BJ (cell line): ENCODE measurements at regions of chr10 and their contacts with region 1.

Region 1: DNA sequence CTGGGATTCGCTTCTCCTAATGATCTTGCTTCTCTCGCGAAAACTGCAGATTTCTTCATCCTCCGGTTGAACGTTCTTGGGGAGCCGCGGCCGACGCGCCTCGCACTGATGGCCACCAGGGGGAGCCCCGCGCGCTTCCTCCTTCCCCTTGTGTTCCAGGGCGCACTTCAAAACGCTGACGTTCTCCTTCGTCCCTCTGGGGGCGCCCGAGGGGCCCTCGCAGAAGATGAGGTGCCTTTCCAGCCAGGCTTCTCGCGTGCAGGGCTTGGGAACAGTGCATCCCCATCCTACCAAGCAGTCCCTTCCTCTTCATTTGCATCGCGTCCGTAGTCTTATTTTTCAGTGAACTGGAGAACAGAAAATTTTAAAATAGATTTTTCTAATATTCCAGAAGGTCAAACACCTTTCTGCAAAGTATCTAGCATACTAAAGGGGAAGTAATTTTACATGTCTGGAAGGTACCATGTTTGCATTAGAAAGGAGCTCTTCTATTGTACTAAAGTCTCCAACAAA is 22.5 kb downstream of the GSTO2 start:
- DNase-seq: no peak
- H3K4me3 ChIP-seq: no peak overlapping the region
- H3K27me3 ChIP-seq: no peaks in the 10 kb centered on the region
- CTCF ChIP-seq: peak; percentile 100

Region 2: DNA sequence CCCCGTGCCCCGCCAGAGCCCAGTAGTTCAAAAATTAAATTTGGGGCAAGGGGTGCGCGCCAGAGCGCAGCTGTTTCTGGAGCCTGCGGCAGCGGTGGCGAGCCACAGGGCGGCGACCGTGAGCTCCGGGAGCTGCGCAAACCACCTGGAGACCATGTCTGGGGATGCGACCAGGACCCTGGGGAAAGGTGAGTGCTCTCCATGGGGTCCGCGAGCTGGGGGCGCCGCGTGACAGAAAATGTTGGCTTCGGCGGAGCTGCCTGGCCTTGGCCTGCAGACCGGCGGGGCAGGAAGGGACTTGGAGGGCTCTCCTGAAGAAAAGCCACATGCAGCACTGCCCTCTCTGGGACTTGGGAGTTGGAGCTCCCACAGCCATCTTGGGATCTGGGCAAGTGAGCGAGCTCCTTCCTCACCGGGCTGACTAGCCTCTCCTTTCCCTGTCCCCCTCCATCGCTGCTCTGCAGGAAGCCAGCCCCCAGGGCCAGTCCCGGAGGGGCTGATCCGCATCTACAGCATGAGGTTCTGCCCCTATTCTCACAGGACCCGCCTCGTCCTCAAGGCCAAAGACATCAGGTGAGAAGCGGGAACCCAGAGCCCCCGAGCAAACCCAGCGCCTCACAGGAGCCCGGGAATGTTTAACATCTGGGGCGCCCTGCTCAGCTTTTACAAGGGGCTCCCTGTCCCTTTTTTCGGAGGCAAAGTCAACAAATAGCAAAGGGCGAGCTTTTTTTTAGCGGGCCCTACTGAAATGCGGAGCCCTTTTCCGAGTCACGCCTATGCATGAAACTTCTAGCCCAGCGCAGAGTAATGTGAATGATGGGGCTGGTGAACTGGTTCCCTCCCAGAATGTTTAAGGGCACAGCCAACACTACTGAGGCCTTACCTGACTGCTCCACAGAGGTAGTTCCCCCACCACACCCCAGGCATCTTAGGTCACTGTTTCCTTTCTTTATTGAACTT is 16.5 kb before region 1 on chr10:
- CTCF ChIA-PET with region 1: interaction called, 154 read pairs
- POLR2A ChIA-PET with region 1: no interaction called
- DNase-seq: no peak
- H3K4me3 ChIP-seq: peak overlapping the region; percentile 29
- H3K27me3 ChIP-seq: no peaks in the 10 kb centered on the region
- CTCF ChIP-seq: peak; percentile 97

Region 3: GRCh38 chr10:104322416-104322782 is 30.9 kb after region 1 on chr10:
- CTCF ChIA-PET with region 1: interaction called, 13 read pairs
- POLR2A ChIA-PET with region 1: no interaction called
- DNase-seq: no peak
- H3K4me3 ChIP-seq: no peak overlapping the region
- H3K27me3 ChIP-seq: no peaks in the 10 kb centered on the region
- CTCF ChIP-seq: no peak

Region 4: DNA sequence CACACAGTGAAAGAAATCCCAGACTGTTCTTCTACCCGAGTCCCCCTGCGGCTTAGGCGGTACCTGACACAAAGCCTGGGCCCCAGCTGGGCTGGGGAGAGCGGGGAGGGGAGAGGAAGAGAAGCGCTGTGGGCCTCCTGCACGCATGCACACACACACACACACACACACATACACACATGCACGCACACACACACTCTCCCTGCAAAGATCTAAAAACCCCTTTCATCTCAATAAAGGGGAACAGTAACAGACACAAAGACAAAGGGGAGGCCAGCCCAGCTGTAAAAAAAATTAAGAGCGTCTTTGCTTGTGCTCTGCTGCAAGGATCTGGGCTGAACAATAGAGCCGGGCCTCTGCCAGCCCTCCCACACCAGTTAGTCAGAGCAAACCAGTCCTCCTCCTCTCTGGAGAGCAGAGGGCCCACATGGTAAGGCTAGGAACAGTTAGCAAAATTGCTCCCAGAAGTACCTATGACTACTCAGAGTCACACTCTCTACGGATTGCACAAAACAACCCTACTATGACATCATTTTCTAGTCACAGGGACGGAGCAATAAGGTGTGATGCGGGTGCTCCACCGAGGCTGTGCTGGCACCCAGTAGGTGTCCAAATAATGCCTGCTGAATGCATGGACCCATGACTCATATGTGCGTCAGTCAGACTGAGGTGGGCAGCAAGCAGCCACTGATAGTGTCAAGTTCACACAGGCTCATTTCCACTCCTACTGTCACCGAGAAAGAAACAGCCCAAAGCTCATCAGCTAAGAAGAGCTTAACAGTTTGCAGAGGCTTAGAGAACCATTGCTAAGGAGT is 37.6 kb after region 1 on chr10:
- CTCF ChIA-PET with region 1: interaction called, 26 read pairs
- POLR2A ChIA-PET with region 1: interaction called, 19 read pairs
- DNase-seq: peak; percentile 77
- H3K4me3 ChIP-seq: peak overlapping the region; percentile 15; the same call in 1 of the 2 replicates
- H3K27me3 ChIP-seq: no peaks in the 10 kb centered on the region
- CTCF ChIP-seq: no peak

Region 5: GRCh38 chr10:104337974-104338735 is 46.7 kb after region 1 on chr10 and contains the start of gene ITPRIP:
- CTCF ChIA-PET with region 1: interaction called, 32 read pairs
- POLR2A ChIA-PET with region 1: no interaction called
- DNase-seq: peak; percentile 56
- H3K4me3 ChIP-seq: peak within 1 kb of the TSS; percentile 87
- H3K27me3 ChIP-seq: no peaks in the 10 kb centered on the region
- CTCF ChIP-seq: peak; percentile 30
- polyA plus RNA-seq, gene ITPRIP: 24.4 and 33.6 TPM in 2 replicates

Region 6: GRCh38 chr10:104353325-104354048 is 62.0 kb after region 1 on chr10 and contains the start of gene CFAP58:
- CTCF ChIA-PET with region 1: interaction called, 259 read pairs
- POLR2A ChIA-PET with region 1: no interaction called
- DNase-seq: no peak
- H3K4me3 ChIP-seq: peak within 1 kb of the TSS; percentile 47
- H3K27me3 ChIP-seq: no peaks in the 10 kb centered on the region
- CTCF ChIP-seq: peak; percentile 82
- polyA plus RNA-seq, gene CFAP58: 0.23 and 0.37 TPM in 2 replicates